ENCODE measurements at regions of chrX and their contacts with region 1.

Region 1: DNA sequence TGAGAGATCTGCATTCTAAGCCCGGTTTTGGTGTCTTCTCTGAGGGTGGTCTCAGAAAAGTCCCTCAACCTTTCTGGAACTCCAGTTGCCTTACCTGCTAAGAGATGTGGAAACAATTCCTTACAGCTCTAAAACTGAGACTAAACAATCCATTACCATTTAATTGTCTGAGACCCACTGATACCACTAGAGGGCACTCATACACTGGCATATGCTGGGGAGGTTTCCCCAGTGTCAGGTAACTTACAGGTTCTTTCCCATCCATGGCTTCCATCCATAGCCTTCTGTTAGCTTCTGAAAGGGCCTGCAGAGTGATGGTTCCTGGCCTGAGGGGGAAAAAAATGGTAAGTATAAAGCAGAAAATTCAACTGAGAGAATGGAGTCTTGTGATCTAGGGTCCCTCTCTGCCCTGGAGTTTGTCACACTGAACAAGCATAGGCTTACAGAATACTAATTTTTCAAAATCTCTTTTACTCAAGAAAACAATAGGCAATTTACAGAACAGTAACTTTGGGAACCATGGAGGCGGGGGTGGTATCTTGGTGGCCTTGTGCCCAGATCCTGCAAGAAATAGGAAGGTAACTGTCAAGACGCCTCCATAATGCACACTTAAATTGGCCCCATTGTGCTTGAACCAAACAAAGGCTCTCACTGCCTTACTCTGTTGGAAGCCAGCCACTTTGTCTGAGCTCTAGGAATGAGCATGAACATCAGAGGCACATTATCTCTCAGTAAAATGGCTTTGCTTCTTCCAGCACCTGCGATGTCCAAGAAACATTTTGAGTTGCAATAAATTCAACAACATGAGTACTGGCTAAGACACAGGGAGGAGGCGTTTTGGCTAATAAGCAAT is 236.1 kb downstream of the OPHN1 start:
- DNase-seq: peak; percentile 29
- ATAC-seq: no peak
- H3K4me3 Mint-ChIP-seq: no peak overlapping the region
- H3K27ac Mint-ChIP-seq: no peak overlapping the region
- H3K4me1 Mint-ChIP-seq: no peaks in the 10 kb centered on the region
- H3K27me3 Mint-ChIP-seq: no peaks in the 10 kb centered on the region

Region 2: DNA sequence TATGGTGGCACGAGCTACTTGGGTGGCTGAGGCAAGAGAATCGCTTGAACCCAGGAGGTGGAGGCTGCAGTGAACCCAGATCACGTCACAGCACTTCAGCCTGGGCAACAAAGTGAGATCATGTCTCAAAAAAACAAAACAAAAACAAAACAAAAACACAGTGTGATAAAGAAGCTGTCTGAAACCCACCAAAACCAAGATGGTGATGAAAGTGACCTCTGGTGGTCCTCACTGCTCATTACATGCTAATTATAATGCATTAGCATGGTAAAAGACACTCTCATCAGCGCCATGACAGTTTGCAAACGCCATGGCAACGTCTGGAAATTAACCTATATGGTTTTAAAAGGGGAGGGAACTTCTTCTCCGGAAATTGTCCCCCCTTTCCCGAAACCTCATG is 265.5 kb after region 1 on chrX:
- CTCF ChIA-PET with region 1: no interaction called
- POLR2A ChIA-PET with region 1: no interaction called
- intact Hi-C with region 1: loop called (anchors 2 to 10 kb)
- DNase-seq: peak; percentile 9
- ATAC-seq: no peak
- H3K4me3 Mint-ChIP-seq: no peak overlapping the region
- H3K27ac Mint-ChIP-seq: no peak overlapping the region
- H3K4me1 Mint-ChIP-seq: no peaks in the 10 kb centered on the region
- H3K27me3 Mint-ChIP-seq: no peaks in the 10 kb centered on the region

Region 3: DNA sequence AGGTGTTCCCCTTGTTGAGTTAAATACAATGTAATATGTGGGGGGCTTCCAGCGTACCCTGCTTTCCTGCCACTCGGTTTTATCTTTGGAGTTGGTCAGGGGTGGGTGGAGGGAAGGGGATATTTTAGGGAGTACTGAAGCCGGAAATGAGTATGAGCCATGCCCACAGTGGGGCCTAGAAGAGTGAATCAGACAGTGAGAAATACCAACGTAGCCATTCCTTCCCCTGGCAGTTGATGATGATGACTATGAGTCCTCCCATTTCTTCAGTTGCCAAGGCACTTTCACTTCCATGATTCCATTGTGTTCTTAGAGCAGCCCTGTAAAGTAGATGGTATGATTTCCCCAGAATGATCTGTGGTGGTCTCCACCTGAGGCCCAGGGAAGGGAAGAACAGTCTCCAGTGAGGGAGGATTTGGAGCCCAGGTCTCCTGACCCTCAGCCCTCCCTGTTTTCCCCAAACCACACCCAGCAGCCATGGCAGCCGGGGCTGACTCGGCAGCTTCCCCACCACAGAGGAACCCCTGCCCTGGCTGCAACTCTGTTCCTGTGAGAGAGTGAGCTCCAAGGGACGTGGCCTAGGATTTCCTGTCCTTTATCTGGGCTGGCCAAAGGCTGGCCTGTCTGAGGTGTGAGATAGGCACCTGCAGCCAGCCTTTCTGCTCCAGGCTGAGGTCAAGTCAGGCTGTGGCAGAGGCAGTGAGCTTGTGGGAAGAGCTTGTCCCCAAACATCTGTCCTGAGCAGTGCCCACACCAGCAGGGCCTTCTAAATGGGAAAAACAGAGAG is 503.0 kb after region 1 on chrX:
- CTCF ChIA-PET with region 1: no interaction called
- POLR2A ChIA-PET with region 1: no interaction called
- intact Hi-C with region 1: loop called in 1 of 2 experiments (anchors 10 kb)
- DNase-seq: no peak
- ATAC-seq: peak; percentile 53
- H3K4me3 Mint-ChIP-seq: no peak overlapping the region
- H3K27ac Mint-ChIP-seq: no peak overlapping the region
- H3K4me1 Mint-ChIP-seq: no peaks in the 10 kb centered on the region
- H3K27me3 Mint-ChIP-seq: peaks cover 4% of the 10 kb centered on the region

Region 4: DNA sequence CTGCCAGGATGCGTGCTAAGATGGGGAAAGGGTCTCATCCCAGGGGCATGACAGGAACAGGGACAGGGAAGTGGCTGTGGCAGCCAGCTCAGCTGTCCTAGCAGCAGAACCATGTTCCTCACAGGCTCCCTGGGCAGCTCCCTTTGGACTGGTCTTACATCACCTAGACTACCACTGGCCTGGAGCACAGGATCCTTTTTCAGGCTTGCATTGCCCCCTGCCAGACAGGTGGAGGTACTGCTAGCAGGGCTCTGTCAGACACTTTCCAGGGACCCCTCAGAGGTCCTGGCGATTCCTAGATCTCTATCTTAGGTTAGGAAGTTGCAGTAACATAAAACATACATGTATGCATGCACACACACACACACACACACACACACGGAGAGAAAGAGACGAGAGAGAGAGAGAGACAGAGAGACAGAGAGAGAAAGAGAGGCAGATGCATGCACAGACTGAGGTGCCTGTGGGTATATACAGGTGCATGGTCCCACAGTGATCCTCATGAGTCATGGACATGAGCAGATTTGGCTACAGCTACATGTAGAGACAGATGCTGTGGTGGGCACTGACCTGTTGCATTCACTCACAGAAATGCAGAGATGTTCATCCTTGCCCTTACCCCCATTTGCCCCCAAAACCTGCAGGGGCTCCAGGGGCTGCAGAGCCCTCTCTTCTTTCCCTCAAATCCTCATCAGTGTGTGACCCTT is 513.9 kb after region 1 on chrX:
- CTCF ChIA-PET with region 1: interaction called, 11 read pairs
- POLR2A ChIA-PET with region 1: no interaction called
- intact Hi-C with region 1: loop called (anchors 1 to 10 kb)
- DNase-seq: peak; percentile 48
- ATAC-seq: no peak
- H3K4me3 Mint-ChIP-seq: no peak overlapping the region
- H3K27ac Mint-ChIP-seq: no peak overlapping the region
- H3K4me1 Mint-ChIP-seq: no peaks in the 10 kb centered on the region
- H3K27me3 Mint-ChIP-seq: no peaks in the 10 kb centered on the region

Region 5: DNA sequence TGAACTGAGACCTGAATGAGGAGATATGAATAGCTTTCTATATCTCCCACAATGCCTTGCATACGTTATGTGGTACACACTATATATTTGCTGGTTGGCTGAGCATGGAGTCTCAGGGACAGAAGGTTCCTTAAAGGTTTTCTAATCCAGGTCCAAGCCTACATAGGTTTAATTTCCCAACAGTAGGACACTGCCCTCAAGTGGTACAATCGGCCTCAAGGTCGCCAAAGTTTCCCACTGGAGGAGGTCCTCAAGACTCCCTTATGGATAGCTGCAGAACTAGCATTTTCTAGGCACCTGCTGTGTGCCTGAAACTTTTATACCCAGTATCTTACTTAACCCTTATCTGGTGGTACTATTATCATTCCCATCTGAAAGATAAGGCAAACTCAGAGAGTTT is 610.7 kb after region 1 on chrX:
- CTCF ChIA-PET with region 1: no interaction called
- POLR2A ChIA-PET with region 1: no interaction called
- intact Hi-C with region 1: loop called in 1 of 2 experiments (anchors 10 kb)
- DNase-seq: no peak
- ATAC-seq: no peak
- H3K4me3 Mint-ChIP-seq: no peak overlapping the region
- H3K27ac Mint-ChIP-seq: no peak overlapping the region
- H3K4me1 Mint-ChIP-seq: no peaks in the 10 kb centered on the region
- H3K27me3 Mint-ChIP-seq: peaks cover 11% of the 10 kb centered on the region

Measured in activated CD4-positive, alpha-beta T cell treated with anti-CD3 and anti-CD28 coated beads for 36 hours (primary cell).